Aorta (tissue), 5 donors: ENCODE measurements at regions of chr2 and their contacts with region 1.

Region 1: GRCh38 chr2:189762551-189763298 is at the start of gene OSGEPL1:
- DNase-seq: peak; percentile 97
- ATAC-seq: peak; percentile 97
- H3K4me3 ChIP-seq: peak within 1 kb of the TSS; percentile 87 to 98
- H3K27ac ChIP-seq: peak within 1 kb of the TSS; percentile 7 to 93
- H3K4me1 ChIP-seq: no peaks in the 10 kb centered on the region
- H3K27me3 ChIP-seq: no peaks in the 10 kb centered on the region
- total RNA-seq, gene OSGEPL1: 3.2 to 7.6 TPM

Region 2: GRCh38 chr2:189783927-189784867 is 21.5 kb after region 1 on chr2 and contains the starts of genes ORMDL1 and PMS1:
- intact Hi-C with region 1: loop called in 1 of 2 experiments (anchors 2 kb)
- DNase-seq: peak; percentile 97 to 99
- ATAC-seq: peak; percentile 100
- H3K4me3 ChIP-seq: peak within 1 kb of the TSS; percentile 68 to 78
- H3K27ac ChIP-seq: peak within 1 kb of the TSS; percentile 81 to 85
- H3K4me1 ChIP-seq: peaks cover 0 to 3% of the 10 kb centered on the region in 2 donors
- H3K27me3 ChIP-seq: no peaks in the 10 kb centered on the region
- total RNA-seq, gene ORMDL1: 52.4 to 63.4 TPM
- total RNA-seq, gene PMS1: 17.4 to 33.3 TPM

Region 3: DNA sequence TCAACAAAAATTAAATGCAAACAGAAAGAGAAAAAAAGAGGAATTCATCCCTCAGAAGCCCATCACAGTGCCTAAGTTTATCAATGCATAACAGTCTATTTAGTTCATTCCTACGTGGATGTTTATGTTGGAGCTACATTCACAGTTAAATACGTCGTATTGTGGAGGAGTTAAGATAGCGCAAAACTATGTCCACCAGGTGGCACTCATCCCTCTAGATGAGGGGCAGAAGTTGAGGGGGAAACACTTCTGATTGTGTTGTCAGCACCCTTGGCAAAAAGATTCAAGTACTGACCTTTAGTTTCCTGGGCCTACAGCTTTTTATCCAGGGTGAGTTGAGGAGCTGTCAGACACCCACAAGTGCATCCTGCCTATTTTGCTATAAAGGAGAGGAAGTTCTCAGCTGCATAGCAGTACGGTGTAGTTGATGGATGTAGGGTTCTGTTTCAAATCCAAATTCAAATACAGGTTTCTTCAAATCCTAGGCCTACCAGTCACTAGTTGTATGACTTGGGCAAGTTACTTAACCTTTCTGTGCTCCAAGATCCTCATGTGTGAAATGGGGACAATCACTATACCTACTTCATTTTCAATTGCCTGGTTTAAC is 1455.7 kb after region 1 on chr2:
- intact Hi-C with region 1: no loop called
- DNase-seq: no peak
- ATAC-seq: no peak
- H3K4me3 ChIP-seq: no peak overlapping the region
- H3K27ac ChIP-seq: no peak overlapping the region
- H3K4me1 ChIP-seq: peaks cover 0 to 2% of the 10 kb centered on the region in 2 donors
- H3K27me3 ChIP-seq: no peaks in the 10 kb centered on the region